ENCODE measurements at regions of chr21 and their contacts with region 1.

Region 1: DNA sequence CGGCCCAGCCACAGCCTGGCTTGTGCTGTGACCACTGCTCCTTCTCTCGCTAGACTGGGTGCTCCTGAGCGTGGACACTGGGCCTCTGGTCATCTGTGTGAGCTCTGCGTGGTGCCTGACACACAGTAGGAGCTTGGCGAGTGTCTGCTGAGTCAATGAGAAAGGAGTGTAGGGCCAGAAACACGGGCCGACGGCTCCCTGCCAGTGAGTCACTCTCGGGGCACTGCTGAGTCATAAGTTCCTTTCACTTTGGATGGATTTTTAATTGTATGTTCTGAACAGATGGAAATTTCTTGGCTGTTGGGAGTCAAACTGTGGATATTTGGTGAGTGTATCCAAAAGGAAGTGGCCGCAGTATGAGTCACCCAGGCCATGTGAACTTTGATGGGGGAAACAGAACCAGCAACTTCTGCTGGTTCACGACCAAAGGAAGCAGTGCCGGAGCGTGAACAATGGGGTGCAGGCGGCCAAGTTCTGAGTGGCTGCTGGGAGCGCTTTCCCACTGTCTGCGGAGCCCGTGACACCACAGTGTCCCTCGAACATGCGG is 41.0 kb upstream of the COL18A1 start:
- DNase-seq: peak; percentile 96
- H3K4me3 Mint-ChIP-seq: peak overlapping the region; percentile 63
- H3K27ac Mint-ChIP-seq: peak overlapping the region; percentile 85
- H3K4me1 Mint-ChIP-seq: peaks cover 29% of the 10 kb centered on the region
- H3K27me3 Mint-ChIP-seq: no peaks in the 10 kb centered on the region
- CTCF ChIP-seq: no peak

Region 2: GRCh38 chr21:43991447-43991991 is 1372.5 kb before region 1 on chr21:
- CTCF ChIA-PET with region 1: no interaction called
- POLR2A ChIA-PET with region 1: no interaction called
- intact Hi-C with region 1: no loop called
- DNase-seq: no peak
- H3K4me3 Mint-ChIP-seq: no peak overlapping the region
- H3K27ac Mint-ChIP-seq: no peak overlapping the region
- H3K4me1 Mint-ChIP-seq: no peaks in the 10 kb centered on the region
- H3K27me3 Mint-ChIP-seq: no peaks in the 10 kb centered on the region
- CTCF ChIP-seq: no peak

Region 3: GRCh38 chr21:45302078-45303055 is 61.6 kb before region 1 on chr21:
- CTCF ChIA-PET with region 1: no interaction called
- POLR2A ChIA-PET with region 1: no interaction called
- intact Hi-C with region 1: no loop called
- DNase-seq: no peak
- H3K4me3 Mint-ChIP-seq: no peak overlapping the region
- H3K27ac Mint-ChIP-seq: no peak overlapping the region
- H3K4me1 Mint-ChIP-seq: peaks cover 4% of the 10 kb centered on the region
- H3K27me3 Mint-ChIP-seq: peaks cover 10% of the 10 kb centered on the region
- CTCF ChIP-seq: no peak

Region 4: DNA sequence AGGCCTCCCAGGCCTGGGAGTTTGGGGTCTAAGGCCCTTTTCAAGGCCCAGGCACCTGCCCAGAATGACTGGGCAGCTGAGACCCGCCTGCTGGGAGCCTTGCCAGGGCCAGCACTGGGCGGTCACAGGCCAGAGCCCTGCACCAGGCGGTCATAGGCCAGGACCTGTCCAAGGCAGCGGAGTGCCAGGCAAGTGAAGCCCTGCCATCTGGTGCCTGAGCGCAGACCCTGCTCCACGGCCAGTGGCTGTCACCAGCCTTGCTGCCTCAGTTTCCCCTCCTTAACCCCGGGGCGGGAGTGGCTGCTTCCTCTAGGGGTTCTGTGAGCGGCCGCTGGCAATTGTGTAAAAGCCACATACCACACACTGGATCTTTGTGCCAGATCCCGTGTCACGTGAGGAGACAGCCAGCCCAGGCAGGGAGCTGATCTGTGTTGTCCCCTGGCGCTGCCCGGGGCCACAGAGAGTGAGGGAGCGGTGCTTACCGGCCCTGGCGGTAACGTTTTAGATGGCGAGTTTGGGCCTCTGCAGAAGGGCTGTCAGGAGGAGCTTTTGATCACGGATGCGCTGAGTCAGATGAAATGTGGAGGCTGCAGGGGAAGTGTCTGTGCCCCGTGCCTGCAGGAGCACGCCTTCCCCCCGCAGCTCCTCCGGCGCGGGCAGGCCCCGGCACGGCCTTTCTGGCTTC is 45.6 kb after region 1 on chr21:
- CTCF ChIA-PET with region 1: no interaction called
- POLR2A ChIA-PET with region 1: no interaction called
- intact Hi-C with region 1: no loop called
- DNase-seq: no peak
- H3K4me3 Mint-ChIP-seq: no peak overlapping the region
- H3K27ac Mint-ChIP-seq: no peak overlapping the region
- H3K4me1 Mint-ChIP-seq: no peaks in the 10 kb centered on the region
- H3K27me3 Mint-ChIP-seq: no peaks in the 10 kb centered on the region
- CTCF ChIP-seq: no peak

Region 5: GRCh38 chr21:45427331-45428271 is 63.6 kb after region 1 on chr21:
- CTCF ChIA-PET with region 1: no interaction called
- POLR2A ChIA-PET with region 1: no interaction called
- intact Hi-C with region 1: loop called (anchors 5 kb)
- DNase-seq: peak; percentile 94
- H3K4me3 Mint-ChIP-seq: no peak overlapping the region
- H3K27ac Mint-ChIP-seq: no peak overlapping the region
- H3K4me1 Mint-ChIP-seq: peaks cover 8% of the 10 kb centered on the region
- H3K27me3 Mint-ChIP-seq: no peaks in the 10 kb centered on the region
- CTCF ChIP-seq: no peak

Measured in MCF 10A (cell line).